Right cardiac atrium (tissue), 5 donors: ENCODE measurements at regions of chr5 and their contacts with region 1.

Region 1: DNA sequence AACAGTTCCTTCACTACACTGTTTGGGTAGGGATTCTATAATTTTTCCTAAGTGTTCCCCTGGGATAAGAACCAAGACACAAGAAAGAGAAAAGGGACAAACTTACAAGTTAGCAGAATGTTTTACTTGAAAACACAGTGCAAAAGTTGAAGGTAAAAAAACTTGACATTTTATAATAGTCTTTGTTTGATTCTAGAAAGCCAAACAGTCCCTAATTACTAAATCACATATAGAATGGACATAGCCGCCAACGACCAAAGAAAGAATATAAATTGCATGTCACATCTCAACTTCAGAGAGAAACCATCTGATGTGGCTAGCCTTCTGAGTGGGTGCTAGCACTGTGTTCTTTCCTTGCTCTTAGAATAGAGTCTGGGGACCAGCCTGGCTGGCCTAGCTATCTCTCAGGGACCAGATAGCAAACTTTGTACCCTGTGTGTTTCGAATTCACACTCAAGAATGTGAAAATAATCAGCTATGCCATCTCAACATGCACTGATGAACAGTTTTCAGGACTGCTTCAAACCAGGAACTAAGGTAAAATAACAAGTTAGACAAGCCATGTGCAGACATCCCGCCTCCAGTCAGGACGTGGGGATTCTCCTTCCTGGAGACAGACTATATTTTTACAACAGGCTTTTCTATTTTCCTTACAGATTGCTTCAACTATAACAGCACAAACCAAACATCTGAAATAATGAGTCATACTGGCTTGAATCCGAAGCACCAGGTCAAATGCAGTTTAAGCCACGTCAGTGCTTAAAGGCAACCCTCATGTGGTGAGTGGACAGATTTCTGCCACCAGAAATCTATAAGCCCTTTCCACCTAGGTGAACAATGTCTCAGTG is 53.7 kb downstream of the LHFPL2 start:
- DNase-seq: peak in 2 of 3 donors; percentile 41 to 60
- ATAC-seq: peak; percentile 90 to 91
- H3K4me3 ChIP-seq: no peak overlapping the region
- H3K27ac ChIP-seq: peak overlapping the region; percentile 80
- H3K4me1 ChIP-seq: peaks cover 12% of the 10 kb centered on the region
- H3K27me3 ChIP-seq: no peaks in the 10 kb centered on the region

Region 2: GRCh38 chr5:78547731-78548615 is 46.9 kb before region 1 on chr5:
- intact Hi-C with region 1: loop called in 1 of 4 experiments (anchors 5 kb)
- DNase-seq: peak; percentile 93 to 94 (median 94)
- ATAC-seq: peak; percentile 92 to 94
- H3K4me3 ChIP-seq: no peak overlapping the region
- H3K27ac ChIP-seq: peak overlapping the region; percentile 93
- H3K4me1 ChIP-seq: peaks cover 17% of the 10 kb centered on the region
- H3K27me3 ChIP-seq: no peaks in the 10 kb centered on the region